ENCODE measurements at regions of chr1 and their contacts with region 1.

Region 1: GRCh38 chr1:156456622-156457465 is 43.7 kb downstream of the MEF2D start:
- DNase-seq: peak; percentile 93 to 99 (median 97)

Region 2: DNA sequence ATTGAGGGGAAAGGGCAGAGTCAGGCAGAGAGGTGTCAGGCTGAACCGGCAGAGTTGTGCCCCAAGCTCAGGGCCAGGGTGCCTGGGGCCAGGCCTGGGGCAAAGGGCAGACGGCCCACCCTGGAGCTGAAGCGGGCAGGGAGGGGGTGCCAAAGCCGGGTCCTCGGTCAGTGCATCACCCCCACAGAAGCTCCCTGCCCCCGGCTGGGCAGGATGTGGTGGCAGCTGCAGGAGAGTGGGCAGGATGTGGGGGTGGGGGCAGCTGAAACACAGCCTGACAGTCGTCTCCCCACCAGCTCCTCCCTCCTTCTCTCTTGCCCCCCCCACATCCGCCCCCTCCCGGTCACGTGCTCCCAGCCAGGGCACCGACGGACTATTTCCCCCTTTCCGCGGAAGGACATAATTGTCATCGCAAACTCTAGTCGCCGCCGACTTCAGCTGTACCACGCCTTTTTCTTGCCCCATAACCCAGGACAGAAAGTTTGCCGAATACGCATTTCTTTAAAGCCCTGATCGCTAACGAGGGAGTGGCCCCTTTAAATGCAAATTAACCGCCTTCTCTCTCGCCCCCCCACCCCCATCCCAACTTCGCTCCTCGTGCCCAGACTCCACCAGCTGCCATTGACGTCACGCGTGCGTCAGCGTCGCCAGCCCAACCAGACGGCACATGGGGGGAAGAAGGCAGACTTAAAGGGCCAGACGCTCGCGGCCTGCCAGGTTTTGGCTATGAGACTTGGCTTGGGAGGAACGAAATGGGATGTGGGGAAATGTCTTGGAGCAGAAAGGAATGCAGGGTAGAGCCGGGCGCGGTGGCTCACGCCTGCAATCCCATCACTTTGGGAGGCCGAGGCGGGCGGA is 48.2 kb after region 1 on chr1:
- intact Hi-C with region 1: loop called (anchors 1 kb)
- DNase-seq: peak; percentile 97 to 100 (median 99)

Region 3: DNA sequence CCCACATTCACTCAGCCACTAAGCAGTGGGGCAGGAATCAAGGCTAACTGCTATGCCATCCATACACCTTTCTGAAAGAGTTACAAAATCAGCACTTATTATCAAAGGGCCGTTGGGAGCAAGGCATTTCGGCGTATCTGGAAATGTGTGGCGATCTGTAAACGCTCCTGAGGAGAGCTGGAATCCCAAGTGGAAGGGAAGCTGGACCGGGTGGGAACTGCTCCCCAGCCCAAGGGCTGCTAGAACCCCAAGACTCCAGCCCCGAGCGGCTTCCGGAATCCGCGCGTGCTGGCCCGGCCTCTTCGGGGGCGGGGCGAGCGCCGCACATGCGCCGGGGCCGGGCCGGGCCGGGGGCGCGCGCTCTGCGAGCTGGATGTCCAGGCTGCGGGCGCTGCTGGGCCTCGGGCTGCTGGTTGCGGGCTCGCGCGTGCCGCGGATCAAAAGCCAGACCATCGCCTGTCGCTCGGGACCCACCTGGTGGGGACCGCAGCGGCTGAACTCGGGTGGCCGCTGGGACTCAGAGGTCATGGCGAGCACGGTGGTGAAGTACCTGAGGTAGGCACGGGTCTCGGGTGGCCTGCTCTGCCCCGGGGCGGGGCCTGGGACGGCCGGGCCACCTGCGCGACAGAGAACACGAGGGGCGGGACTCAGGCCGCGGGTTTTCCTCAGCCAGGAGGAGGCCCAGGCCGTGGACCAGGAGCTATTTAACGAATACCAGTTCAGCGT is 134.8 kb after region 1 on chr1 and contains the start of gene NAXE:
- intact Hi-C with region 1: loop called (anchors 10 kb)
- DNase-seq: peak in 41 of 42 donors; percentile 49 to 90 (median 82)